Heart left ventricle (tissue), 16 donors: ENCODE measurements at regions of chr4 and their contacts with region 1.

Region 1: GRCh38 chr4:169810325-169811323 is 52.9 kb upstream of the HPF1 start:
- DNase-seq: peak in 2 of 5 donors; percentile 16 to 21
- ATAC-seq: peak in 2 of 4 donors; percentile 30 to 33
- H3K4me3 ChIP-seq: no peak overlapping the region
- H3K27ac ChIP-seq: no peak overlapping the region
- H3K4me1 ChIP-seq: no peaks in the 10 kb centered on the region
- H3K27me3 ChIP-seq: no peaks in the 10 kb centered on the region
- CTCF ChIP-seq: peak; percentile 75 to 93 (median 85)
- POLR2A ChIP-seq: no peak

Region 2: GRCh38 chr4:169724260-169724659 is 86.4 kb before region 1 on chr4:
- intact Hi-C with region 1: no loop called
- DNase-seq: no peak
- ATAC-seq: peak in 1 of 4 donors; percentile 23
- H3K4me3 ChIP-seq: no peak overlapping the region
- H3K27ac ChIP-seq: no peak overlapping the region
- H3K4me1 ChIP-seq: no peaks in the 10 kb centered on the region
- H3K27me3 ChIP-seq: no peaks in the 10 kb centered on the region
- CTCF ChIP-seq: no peak
- POLR2A ChIP-seq: no peak

Region 3: GRCh38 chr4:169869490-169869889 is 58.9 kb after region 1 on chr4:
- intact Hi-C with region 1: no loop called
- DNase-seq: no peak
- ATAC-seq: no peak
- H3K4me3 ChIP-seq: no peak overlapping the region
- H3K27ac ChIP-seq: no peak overlapping the region
- H3K4me1 ChIP-seq: no peaks in the 10 kb centered on the region
- H3K27me3 ChIP-seq: peaks cover 0 to 4% (median 0%) of the 10 kb centered on the region in 9 donors
- CTCF ChIP-seq: no peak
- POLR2A ChIP-seq: no peak

Region 4: GRCh38 chr4:170038769-170039168 is 228.1 kb after region 1 on chr4:
- intact Hi-C with region 1: loop called in 1 of 10 experiments (anchors 5 kb)
- DNase-seq: no peak
- ATAC-seq: no peak
- H3K4me3 ChIP-seq: no peak overlapping the region
- H3K27ac ChIP-seq: no peak overlapping the region
- H3K4me1 ChIP-seq: no peaks in the 10 kb centered on the region
- H3K27me3 ChIP-seq: peaks cover 0 to 4% (median 0%) of the 10 kb centered on the region in 9 donors
- CTCF ChIP-seq: no peak
- POLR2A ChIP-seq: no peak

Region 5: DNA sequence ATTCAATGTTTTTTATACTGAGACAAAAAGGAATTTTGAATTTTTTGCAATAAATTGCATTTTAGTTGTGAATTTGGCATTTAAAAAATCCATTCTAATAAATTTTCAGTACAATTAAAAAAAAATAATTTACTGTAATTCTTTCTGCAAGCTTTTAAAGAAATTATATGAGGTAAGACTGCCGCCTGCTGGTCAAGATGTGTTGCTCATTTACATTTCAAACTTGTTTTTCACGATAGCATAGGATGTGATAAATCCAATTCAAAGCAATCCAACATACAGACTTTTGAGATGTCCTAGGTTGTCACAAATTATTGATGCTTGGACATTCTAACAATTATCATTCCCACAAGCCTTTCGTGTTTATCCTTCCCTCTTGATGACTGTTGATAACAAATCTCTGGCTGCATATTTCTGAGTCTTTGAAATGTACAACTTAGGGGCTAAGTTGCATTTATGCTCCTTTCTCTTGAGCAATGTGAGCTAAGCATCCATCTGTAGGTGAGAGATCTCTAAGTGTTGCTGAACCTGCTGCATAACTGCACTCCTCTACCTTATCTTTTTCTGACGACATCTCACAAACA is 237.2 kb after region 1 on chr4:
- intact Hi-C with region 1: loop called (anchors 1 to 5 kb)
- DNase-seq: peak in 2 of 5 donors; percentile 16 to 43
- ATAC-seq: no peak
- H3K4me3 ChIP-seq: no peak overlapping the region
- H3K27ac ChIP-seq: no peak overlapping the region
- H3K4me1 ChIP-seq: no peaks in the 10 kb centered on the region
- H3K27me3 ChIP-seq: no peaks in the 10 kb centered on the region
- CTCF ChIP-seq: peak; percentile 60 to 88 (median 80)
- POLR2A ChIP-seq: no peak